Adrenal gland (tissue), 19 donors: ENCODE measurements at regions of chr9 and their contacts with region 1.

Region 1: GRCh38 chr9:33167046-33167808 is at the start of gene B4GALT1:
- DNase-seq: peak; percentile 94 to 98 (median 96)
- H3K4me3 ChIP-seq: peak within 1 kb of the TSS; percentile 56 to 99 (median 84)
- H3K27ac ChIP-seq: peak within 1 kb of the TSS; percentile 82 to 99 (median 96)
- H3K4me1 ChIP-seq: peaks cover 44 to 61% of the 10 kb centered on the region in 2 donors
- H3K27me3 ChIP-seq: no peaks in the 10 kb centered on the region
- CTCF ChIP-seq: peak in 1 of 6 experiments; percentile 21
- POLR2A ChIP-seq: peak; percentile 84 to 89
- total RNA-seq, gene B4GALT1: 23.8 to 117 (median 67.6) TPM

Region 2: DNA sequence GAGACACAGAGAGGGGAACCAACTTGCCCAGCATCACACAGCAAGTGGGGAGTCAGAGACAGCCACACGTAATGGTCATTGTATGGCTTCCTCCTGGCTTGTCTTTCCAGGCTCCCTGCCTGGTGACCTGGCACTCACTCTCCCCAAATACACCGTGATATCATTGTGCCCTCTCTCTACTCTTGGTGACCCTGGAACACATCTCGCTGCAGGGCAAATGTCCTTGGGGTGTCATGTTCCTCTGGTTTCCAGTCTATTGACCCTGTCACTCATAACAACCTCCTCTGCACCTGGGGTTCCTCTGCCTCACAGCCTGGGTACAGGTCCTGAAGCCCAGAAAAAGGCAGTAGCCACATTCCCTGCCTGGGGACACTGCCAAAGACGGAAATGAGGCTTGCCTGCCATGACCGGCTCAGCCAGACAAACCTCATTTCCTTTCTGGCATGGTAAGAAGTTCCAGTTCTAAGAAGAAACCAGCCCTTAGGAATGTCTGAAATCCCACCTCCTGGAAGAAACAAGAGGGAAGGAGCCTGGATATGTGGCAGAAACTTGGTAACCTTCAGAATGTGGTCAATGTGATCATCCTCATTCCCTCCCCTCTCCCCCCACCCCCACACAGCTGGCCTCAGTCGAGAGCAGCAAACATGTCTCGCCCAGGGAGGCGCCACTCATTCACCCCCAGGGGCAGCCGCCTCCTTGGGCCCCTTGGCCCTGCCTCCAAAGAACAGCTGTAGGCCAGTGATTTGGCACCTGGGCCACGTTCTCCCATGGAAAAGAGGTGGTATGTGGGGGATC is 60.2 kb before region 1 on chr9:
- intact Hi-C with region 1: loop called in 1 of 2 experiments (anchors 10 kb)
- DNase-seq: peak; percentile 54 to 86 (median 67)
- H3K4me3 ChIP-seq: no peak overlapping the region
- H3K27ac ChIP-seq: peak overlapping the region; percentile 9 to 86 (median 60)
- H3K4me1 ChIP-seq: peaks cover 14 to 17% of the 10 kb centered on the region in 2 donors
- H3K27me3 ChIP-seq: no peaks in the 10 kb centered on the region
- CTCF ChIP-seq: no peak
- POLR2A ChIP-seq: no peak

Region 3: GRCh38 chr9:33393581-33393980 is 226.4 kb after region 1 on chr9:
- intact Hi-C with region 1: no loop called
- DNase-seq: peak in 6 of 7 donors; percentile 60 to 80 (median 70)
- H3K4me3 ChIP-seq: no peak overlapping the region
- H3K27ac ChIP-seq: peak overlapping the region in 1 of 5 donors; percentile 61
- H3K4me1 ChIP-seq: peaks cover 19 to 21% of the 10 kb centered on the region in 2 donors
- H3K27me3 ChIP-seq: no peaks in the 10 kb centered on the region
- CTCF ChIP-seq: no peak
- POLR2A ChIP-seq: no peak